A549 (cell line): ENCODE measurements at regions of chr1 and their contacts with region 1.

Region 1: DNA sequence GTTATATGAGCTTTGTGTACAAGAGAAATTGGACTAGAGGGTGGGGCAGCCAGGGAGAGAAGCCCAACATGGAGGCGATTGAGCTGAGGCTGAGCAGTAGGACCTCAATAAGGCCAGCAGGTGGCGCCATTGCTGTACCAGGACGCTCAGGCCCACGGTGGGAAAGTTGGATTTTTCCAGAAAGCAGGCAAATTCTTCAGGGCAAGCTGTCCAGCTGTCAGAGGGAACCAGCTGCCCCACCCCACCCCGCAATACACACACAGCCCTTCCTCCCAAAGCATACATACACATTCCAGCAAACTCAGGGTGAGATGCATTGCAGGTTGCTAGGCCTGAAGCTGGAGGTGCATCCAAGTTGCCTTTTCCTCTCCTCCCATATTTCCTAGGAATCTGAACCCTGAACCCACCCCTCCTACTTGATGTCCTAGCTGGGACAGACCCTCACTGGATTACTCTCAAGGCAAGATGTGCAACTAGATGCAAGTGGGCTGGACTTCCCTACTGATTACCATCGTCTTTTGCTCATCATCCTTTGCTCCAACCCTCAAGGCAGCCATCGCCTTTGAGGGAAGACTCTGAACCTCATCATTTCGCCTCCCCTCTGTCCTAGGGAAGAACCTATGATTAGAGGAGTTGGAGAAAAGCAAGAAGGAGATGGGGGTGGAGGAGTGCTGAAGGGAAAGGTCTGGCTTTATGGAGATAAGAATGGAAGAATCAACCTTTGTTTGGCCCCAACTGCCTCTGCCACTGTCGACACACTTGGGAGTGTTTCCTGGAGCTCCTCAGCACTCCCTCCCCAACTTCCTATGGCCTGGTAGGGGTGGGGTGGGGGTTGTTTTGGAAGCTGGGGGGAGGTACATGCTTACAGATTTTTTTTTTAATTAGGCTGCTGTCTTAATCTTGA is 25.5 kb downstream of the CD34 start:
- DNase-seq: peak; percentile 81 to 85
- ATAC-seq: peak; percentile 90 to 99
- H3K4me3 ChIP-seq: no peak overlapping the region
- H3K27ac ChIP-seq: no peak overlapping the region
- H3K4me1 ChIP-seq: peaks cover 7% of the 10 kb centered on the region; the same call in 2 of the 3 replicates
- CTCF ChIP-seq: peak; percentile 87
- EP300 ChIP-seq: no peak
- POLR2A ChIP-seq: no peak
- RAD21 ChIP-seq: peak; percentile 82 to 85

Region 2: DNA sequence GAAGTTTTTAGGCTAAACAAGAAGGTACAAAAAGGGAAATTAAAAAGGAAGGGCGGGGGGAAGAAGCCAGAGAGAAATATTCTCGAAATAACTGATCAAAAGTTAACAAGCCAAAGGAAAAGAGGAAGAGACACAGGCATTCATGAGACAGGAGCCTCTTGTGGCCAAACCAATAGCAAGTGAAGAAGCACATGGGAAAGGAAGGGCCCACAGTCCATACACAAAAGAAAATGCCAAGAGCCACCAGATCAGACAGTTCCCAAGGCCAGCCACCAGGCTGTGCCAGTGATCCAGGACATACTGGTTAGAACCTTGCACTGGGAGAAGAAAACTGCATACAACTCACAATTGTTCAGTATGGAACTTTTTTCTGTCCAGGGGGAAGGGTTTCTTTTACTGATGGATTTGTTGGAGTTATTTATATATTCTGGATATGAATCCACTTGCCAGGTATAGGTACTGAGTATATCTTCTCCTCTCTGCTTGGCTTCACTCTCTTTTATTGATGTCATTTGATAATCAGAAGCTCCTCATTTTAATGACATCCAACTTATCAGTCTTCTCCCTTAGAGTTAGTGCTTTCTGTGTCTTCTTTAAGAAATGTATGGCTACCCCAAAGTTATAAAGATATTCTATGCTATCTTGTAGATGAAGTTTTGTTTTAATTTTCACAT is 56.8 kb before region 1 on chr1:
- CTCF ChIA-PET with region 1: interaction called, 20 read pairs
- POLR2A ChIA-PET with region 1: no interaction called
- DNase-seq: peak; percentile 86 to 90
- ATAC-seq: peak; percentile 69 to 81
- H3K4me3 ChIP-seq: no peak overlapping the region
- H3K27ac ChIP-seq: peak overlapping the region; percentile 32 to 43; a peak in 4 of 6 replicates
- H3K4me1 ChIP-seq: peaks cover 45% of the 10 kb centered on the region
- CTCF ChIP-seq: peak; percentile 74
- EP300 ChIP-seq: no peak
- POLR2A ChIP-seq: no peak
- RAD21 ChIP-seq: peak; percentile 77 to 80

Region 3: GRCh38 chr1:207868774-207869721 is 16.3 kb before region 1 on chr1:
- CTCF ChIA-PET with region 1: interaction called, 86 read pairs
- POLR2A ChIA-PET with region 1: no interaction called
- DNase-seq: peak; percentile 66 to 69
- ATAC-seq: peak; percentile 81 to 89
- H3K4me3 ChIP-seq: peak overlapping the region; percentile 83
- H3K27ac ChIP-seq: peak overlapping the region; percentile 88 to 100
- H3K4me1 ChIP-seq: peaks cover 29% of the 10 kb centered on the region
- CTCF ChIP-seq: peak; percentile 91
- EP300 ChIP-seq: no peak
- POLR2A ChIP-seq: peak; percentile 15; the same call in 1 of the 2 replicates
- RAD21 ChIP-seq: peak; percentile 35 to 68

Region 4: DNA sequence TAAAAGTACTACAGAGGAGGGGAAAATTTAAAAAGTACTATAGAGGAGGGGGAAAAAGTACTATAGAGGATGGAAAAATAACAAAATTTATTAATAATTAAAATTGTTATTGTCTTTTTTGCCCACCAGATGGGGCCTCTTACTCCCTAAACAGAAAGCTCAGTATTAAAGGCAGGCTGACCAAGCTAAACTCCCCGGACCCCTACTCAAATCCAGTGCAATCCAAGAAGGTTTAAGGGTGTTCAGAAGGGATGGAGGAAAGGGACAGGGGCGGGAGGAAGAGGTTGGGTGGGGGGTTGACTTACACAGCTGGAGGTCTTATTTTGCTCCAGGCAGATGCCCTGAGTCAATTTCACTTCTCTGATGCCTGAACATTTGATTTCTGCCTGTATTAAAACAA is 11.8 kb after region 1 on chr1:
- CTCF ChIA-PET with region 1: interaction called, 83 read pairs
- POLR2A ChIA-PET with region 1: interaction called, 7 read pairs
- DNase-seq: no peak
- ATAC-seq: peak; percentile 40 to 45; a peak in 3 of 6 replicates
- H3K4me3 ChIP-seq: no peak overlapping the region
- H3K27ac ChIP-seq: no peak overlapping the region
- H3K4me1 ChIP-seq: no peaks in the 10 kb centered on the region
- CTCF ChIP-seq: peak; percentile 60
- EP300 ChIP-seq: no peak
- POLR2A ChIP-seq: no peak
- RAD21 ChIP-seq: peak; percentile 48 to 58

Region 5: GRCh38 chr1:207908107-207908734 is 22.8 kb after region 1 on chr1:
- CTCF ChIA-PET with region 1: interaction called, 13 read pairs
- POLR2A ChIA-PET with region 1: no interaction called
- DNase-seq: no peak
- ATAC-seq: no peak
- H3K4me3 ChIP-seq: no peak overlapping the region
- H3K27ac ChIP-seq: no peak overlapping the region
- H3K4me1 ChIP-seq: 0 out of 3 replicates have a peak, but pooled peaks cover 4% of the 10 kb centered on the region
- CTCF ChIP-seq: no peak
- EP300 ChIP-seq: no peak
- POLR2A ChIP-seq: no peak
- RAD21 ChIP-seq: no peak

Region 6: DNA sequence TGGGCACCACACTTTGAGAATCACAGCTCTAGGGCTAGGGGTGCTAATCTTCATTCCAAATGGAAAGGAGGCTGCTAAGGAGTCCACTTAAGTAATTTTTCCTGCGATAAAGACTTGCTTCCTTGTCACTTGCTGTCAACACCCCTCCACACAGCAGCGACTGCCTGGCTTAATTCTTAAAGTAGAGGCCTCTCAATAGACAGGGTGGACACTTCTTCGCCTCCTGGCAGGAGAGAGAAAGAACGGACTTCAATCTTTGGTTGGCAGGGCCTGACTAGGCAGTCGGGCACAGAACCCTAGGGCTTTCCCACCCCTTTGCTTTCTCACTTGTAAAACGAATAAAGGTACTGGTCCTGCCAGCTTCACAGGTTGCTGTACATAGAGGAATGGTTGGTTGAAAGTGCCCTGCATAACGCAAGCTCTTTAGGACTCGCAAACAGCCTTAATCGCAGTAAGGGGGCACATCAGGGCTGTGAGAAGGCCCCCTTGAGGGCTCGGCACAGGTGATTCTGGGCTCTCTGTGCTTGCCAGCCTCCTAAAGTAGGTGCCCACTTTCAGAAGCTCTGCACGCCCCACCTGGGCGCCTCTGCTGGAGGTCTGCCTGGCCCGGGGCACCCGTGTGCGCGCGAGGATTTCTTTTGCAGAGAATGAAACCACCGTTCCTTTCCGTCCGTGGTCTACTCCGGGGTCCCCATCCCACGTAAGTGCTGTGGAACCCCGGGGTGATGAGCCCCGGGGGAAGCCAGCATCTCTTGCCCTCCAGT is 73.2 kb after region 1 on chr1:
- CTCF ChIA-PET with region 1: interaction called, 112 read pairs
- POLR2A ChIA-PET with region 1: interaction called, 12 read pairs
- DNase-seq: no peak
- ATAC-seq: no peak
- H3K4me3 ChIP-seq: no peak overlapping the region
- H3K27ac ChIP-seq: no peak overlapping the region
- H3K4me1 ChIP-seq: 0 out of 3 replicates have a peak, but pooled peaks cover 3% of the 10 kb centered on the region
- CTCF ChIP-seq: no peak
- EP300 ChIP-seq: no peak
- POLR2A ChIP-seq: no peak
- RAD21 ChIP-seq: no peak

Region 7: GRCh38 chr1:207997486-207998268 is 112.3 kb after region 1 on chr1:
- CTCF ChIA-PET with region 1: interaction called, 18 read pairs
- POLR2A ChIA-PET with region 1: no interaction called
- DNase-seq: peak; percentile 69 to 81
- ATAC-seq: peak; percentile 87 to 97; a peak in 5 of 6 replicates
- H3K4me3 ChIP-seq: no peak overlapping the region
- H3K27ac ChIP-seq: no peak overlapping the region
- H3K4me1 ChIP-seq: no peaks in the 10 kb centered on the region
- CTCF ChIP-seq: peak; percentile 73
- EP300 ChIP-seq: no peak
- POLR2A ChIP-seq: no peak
- RAD21 ChIP-seq: peak in 1 of 2 experiments; percentile 31; a peak in 3 of 5 replicates

Region 8: DNA sequence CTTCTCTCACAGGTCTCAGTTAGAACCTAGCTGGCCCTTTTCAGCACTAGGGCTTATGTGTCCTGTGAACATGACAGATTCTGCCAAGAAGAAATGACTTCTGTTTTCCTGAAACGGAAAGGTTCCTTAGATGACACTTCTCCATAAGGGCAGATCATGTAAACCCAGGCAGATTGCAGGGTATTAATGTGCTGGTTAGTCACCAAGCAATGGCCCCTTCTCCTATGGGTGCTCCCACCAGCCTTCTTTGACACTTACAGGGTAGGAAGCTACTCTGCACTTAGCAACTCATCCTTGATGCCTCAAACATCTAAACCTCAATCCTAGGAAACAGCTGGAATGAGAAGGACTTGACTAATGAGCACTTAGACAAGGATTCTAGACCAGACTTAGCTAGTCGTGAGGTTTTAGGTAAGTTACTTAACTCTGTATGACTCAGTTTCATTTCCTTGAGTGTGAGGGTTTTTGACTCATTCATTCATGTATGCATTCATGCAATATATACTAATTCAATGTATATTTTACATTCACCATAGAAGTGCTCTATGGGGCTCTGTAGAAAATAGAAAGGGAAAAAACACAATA is 432.9 kb after region 1 on chr1:
- CTCF ChIA-PET with region 1: no interaction called
- POLR2A ChIA-PET with region 1: no interaction called
- DNase-seq: no peak
- ATAC-seq: no peak
- H3K4me3 ChIP-seq: no peak overlapping the region
- H3K27ac ChIP-seq: no peak overlapping the region
- H3K4me1 ChIP-seq: no peaks in the 10 kb centered on the region
- CTCF ChIP-seq: no peak
- EP300 ChIP-seq: no peak
- POLR2A ChIP-seq: no peak
- RAD21 ChIP-seq: no peak